ENCODE measurements at regions of chr1 and their contacts with region 1.

Region 1: GRCh38 chr1:44587796-44588460 is 86.4 kb downstream of the TMEM53 start:
- DNase-seq: peak in 3 of 4 experiments; percentile 35 to 75 (median 71)
- ATAC-seq: peak; percentile 52
- H3K4me3 ChIP-seq: no peak overlapping the region
- H3K27ac ChIP-seq: no peak overlapping the region
- H3K4me1 ChIP-seq: peaks cover 0 to 8% of the 10 kb centered on the region in 2 experiments; a peak in 3 of 5 replicates
- H3K27me3 ChIP-seq: peaks cover 66 to 90% of the 10 kb centered on the region in 2 experiments
- CTCF ChIP-seq: no peak
- EP300 ChIP-seq: no peak
- POLR2A ChIP-seq: no peak
- RAD21 ChIP-seq: no peak

Region 2: GRCh38 chr1:44500181-44501046 is 87.5 kb before region 1 on chr1:
- CTCF ChIA-PET with region 1: no interaction called
- POLR2A ChIA-PET with region 1: no interaction called
- in situ Hi-C with region 1: no loop called
- intact Hi-C with region 1: no loop called
- DNase-seq: peak in 3 of 4 experiments; percentile 37 to 49 (median 44)
- ATAC-seq: peak; percentile 84
- H3K4me3 ChIP-seq: no peak overlapping the region
- H3K27ac ChIP-seq: no peak overlapping the region
- H3K4me1 ChIP-seq: no peaks in the 10 kb centered on the region
- H3K27me3 ChIP-seq: peaks cover 63 to 78% of the 10 kb centered on the region in 2 experiments
- CTCF ChIP-seq: peak; percentile 49 to 69 (median 67)
- EP300 ChIP-seq: no peak
- POLR2A ChIP-seq: no peak
- RAD21 ChIP-seq: peak; percentile 29 to 60

Region 3: DNA sequence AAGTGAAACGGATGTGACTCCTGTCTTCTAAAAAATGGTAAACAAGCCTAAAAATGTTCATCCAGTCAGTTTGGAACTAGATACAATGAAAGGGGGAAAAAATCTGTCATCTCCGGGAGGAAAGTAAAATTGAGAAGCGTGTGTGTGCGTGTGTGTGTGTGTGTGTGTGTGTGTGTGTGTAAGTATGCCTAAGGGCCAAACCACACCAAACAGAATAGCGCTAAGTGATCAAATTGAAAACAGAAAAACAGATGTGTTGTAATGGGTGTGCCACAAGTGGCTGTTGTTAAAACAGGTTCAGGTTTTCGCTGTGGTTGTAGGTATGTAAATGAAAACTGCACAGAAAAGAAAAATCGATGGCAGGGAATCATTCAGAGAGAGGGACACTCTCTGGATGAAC is 76.2 kb before region 1 on chr1:
- CTCF ChIA-PET with region 1: no interaction called
- POLR2A ChIA-PET with region 1: interaction called, 3 read pairs
- in situ Hi-C with region 1: no loop called
- intact Hi-C with region 1: loop called (anchors 5 kb)
- DNase-seq: no peak
- ATAC-seq: no peak
- H3K4me3 ChIP-seq: no peak overlapping the region
- H3K27ac ChIP-seq: no peak overlapping the region
- H3K4me1 ChIP-seq: no peaks in the 10 kb centered on the region; a peak in 1 of 5 replicates
- H3K27me3 ChIP-seq: peaks cover 62 to 66% of the 10 kb centered on the region in 2 experiments
- CTCF ChIP-seq: no peak
- EP300 ChIP-seq: no peak
- POLR2A ChIP-seq: no peak
- RAD21 ChIP-seq: no peak

Region 4: GRCh38 chr1:44553771-44554170 is 34.2 kb before region 1 on chr1:
- CTCF ChIA-PET with region 1: no interaction called
- POLR2A ChIA-PET with region 1: no interaction called
- in situ Hi-C with region 1: no loop called
- intact Hi-C with region 1: no loop called
- DNase-seq: no peak
- ATAC-seq: no peak
- H3K4me3 ChIP-seq: no peak overlapping the region
- H3K27ac ChIP-seq: no peak overlapping the region
- H3K4me1 ChIP-seq: no peaks in the 10 kb centered on the region
- H3K27me3 ChIP-seq: peaks cover 63 to 65% of the 10 kb centered on the region in 2 experiments
- CTCF ChIP-seq: no peak
- EP300 ChIP-seq: no peak
- POLR2A ChIP-seq: no peak
- RAD21 ChIP-seq: no peak

Region 5: DNA sequence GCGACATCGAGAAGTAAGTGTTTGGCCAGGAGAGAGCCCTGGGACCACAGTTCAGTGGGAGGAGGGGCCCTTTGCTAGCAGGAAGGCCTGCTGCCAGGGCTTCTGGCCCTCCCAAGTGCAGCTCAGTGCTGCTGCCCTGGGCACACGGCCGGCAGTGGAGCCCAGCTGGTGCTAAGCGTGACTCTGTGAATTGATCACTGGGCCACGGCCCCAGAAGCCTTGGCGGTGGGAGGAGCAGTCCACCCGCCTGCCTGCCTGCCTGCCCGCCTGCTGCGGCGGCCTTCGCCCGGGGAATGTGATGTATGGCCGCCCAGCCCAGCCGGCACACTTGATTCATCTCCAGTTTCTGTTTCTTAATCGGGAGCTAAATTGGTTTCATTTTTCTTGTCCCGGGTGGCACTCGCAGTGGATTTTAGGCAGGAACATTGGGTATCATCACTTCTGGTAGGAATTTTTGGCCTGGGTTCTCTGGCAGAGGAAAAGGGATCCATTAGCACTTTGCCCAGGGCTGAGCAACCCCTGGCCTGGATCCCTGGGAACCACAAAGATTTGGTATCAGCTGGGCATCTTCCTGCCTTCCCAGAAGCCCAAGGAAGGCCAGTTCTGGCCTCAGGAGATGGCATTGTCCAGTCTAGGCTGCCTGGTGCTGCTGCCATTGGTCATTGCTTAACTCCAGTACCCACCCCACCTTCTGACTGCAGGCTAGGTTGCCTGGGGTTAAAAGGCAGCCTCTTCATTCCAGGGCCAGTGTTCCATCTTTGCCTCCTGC is 57.7 kb after region 1 on chr1:
- CTCF ChIA-PET with region 1: no interaction called
- POLR2A ChIA-PET with region 1: no interaction called
- in situ Hi-C with region 1: no loop called
- intact Hi-C with region 1: no loop called
- DNase-seq: no peak
- ATAC-seq: no peak
- H3K4me3 ChIP-seq: no peak overlapping the region
- H3K27ac ChIP-seq: no peak overlapping the region
- H3K4me1 ChIP-seq: peaks cover 0 to 19% of the 10 kb centered on the region in 2 experiments; a peak in 2 of 5 replicates
- H3K27me3 ChIP-seq: no peaks in the 10 kb centered on the region
- CTCF ChIP-seq: no peak
- EP300 ChIP-seq: no peak
- POLR2A ChIP-seq: no peak
- RAD21 ChIP-seq: no peak

Region 6: GRCh38 chr1:44848456-44849181 is 260.7 kb after region 1 on chr1:
- CTCF ChIA-PET with region 1: no interaction called
- POLR2A ChIA-PET with region 1: no interaction called
- in situ Hi-C with region 1: no loop called
- intact Hi-C with region 1: no loop called
- DNase-seq: no peak
- ATAC-seq: no peak
- H3K4me3 ChIP-seq: no peak overlapping the region
- H3K27ac ChIP-seq: no peak overlapping the region
- H3K4me1 ChIP-seq: peaks cover 0 to 1% of the 10 kb centered on the region in 2 experiments; a peak in 2 of 5 replicates
- H3K27me3 ChIP-seq: no peaks in the 10 kb centered on the region
- CTCF ChIP-seq: no peak
- EP300 ChIP-seq: no peak
- POLR2A ChIP-seq: no peak
- RAD21 ChIP-seq: no peak

Measured in K562 (cell line).